Tibial artery (tissue), 4 donors: ENCODE measurements at regions of chr5 and their contacts with region 1.

Region 1: DNA sequence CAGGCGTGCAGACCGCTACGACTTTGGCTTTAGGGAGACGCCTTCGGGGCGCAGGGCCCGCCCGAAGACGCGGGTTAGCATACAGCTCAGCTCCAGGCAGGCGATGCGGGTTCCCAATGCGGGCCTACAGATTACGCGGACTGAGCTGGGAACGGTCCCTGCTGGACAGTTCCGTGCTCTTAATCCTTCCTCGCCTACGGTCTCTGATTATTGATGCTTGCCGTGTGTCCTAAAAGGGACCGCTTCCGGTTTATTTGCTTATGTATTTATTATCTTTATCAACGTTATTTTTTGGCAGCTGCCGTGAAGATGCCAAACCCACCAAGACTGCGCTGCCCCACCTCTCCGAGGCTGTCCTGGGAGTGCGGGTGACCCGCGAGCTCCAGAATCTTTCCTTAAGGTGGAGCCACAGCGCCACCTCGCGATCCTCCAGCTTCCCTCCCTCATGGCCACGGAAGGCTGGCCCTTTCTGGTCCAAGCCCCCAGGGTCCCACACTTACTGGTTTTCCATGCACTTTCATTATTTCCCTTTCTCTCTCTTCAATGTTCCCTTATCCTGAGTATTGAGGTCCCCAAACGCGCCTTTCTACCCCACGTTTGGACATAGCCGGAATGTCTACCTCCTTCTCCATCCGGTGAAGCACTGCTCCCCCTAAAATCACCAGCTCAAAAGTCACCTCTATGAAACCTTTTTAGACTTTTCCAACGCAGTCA is 7.0 kb upstream of the EBF1 start:
- DNase-seq: peak; percentile 75 to 85
- H3K4me3 ChIP-seq: peak overlapping the region; percentile 37 to 43
- H3K27ac ChIP-seq: peak overlapping the region in 1 of 2 donors; percentile 15
- H3K4me1 ChIP-seq: peaks cover 0 to 40% (median 16%) of the 10 kb centered on the region in 4 donors
- H3K27me3 ChIP-seq: no peaks in the 10 kb centered on the region
- CTCF ChIP-seq: peak; percentile 88 to 95

Region 2: GRCh38 chr5:157820593-157821252 is 1286.0 kb before region 1 on chr5:
- intact Hi-C with region 1: loop called (anchors 10 kb)
- DNase-seq: no peak
- H3K4me3 ChIP-seq: no peak overlapping the region
- H3K27ac ChIP-seq: peak overlapping the region; percentile 51 to 56
- H3K4me1 ChIP-seq: peaks cover 0 to 64% (median 16%) of the 10 kb centered on the region in 4 donors
- H3K27me3 ChIP-seq: no peaks in the 10 kb centered on the region
- CTCF ChIP-seq: peak; percentile 47 to 53

Region 3: DNA sequence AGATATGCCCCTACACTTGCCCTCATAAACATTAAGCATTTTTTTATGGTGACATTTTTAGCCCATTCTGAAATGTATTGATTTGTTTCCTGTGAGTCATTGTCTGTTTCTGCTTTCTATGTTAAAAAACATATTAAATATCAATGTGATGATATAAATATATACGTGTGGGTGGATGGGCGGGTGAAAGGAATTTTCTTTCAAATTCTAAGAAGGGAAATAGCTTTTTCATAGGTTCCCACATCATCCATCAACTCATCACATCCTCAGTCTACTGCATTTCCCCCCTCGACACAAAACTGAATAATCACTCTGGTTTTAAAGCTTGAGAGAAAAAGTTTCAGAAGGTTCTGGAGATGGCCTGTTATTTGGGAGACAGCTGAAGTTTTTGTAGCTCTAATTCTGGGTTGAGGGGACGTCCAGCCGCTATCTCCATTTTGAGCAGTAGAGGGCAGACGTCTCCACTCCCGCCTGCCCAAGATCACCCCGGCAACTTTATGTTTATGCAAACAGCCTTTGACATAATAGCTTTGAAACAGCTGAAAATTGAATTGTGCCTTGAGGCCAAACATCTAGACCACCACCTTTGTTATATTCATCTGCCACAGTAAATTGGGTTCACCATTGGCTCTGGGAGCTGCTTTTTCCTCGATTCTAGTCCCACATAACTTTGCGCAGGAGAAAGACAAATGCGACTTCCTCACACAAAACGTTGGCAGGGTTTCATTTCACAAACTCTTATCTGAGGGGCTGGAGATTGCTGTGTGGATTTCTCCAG is 1031.5 kb before region 1 on chr5:
- intact Hi-C with region 1: loop called (anchors 10 kb)
- DNase-seq: peak; percentile 43 to 70
- H3K4me3 ChIP-seq: peak overlapping the region; percentile 21 to 41
- H3K27ac ChIP-seq: no peak overlapping the region
- H3K4me1 ChIP-seq: peaks cover 0 to 5% (median 2%) of the 10 kb centered on the region in 4 donors
- H3K27me3 ChIP-seq: no peaks in the 10 kb centered on the region
- CTCF ChIP-seq: peak; percentile 76 to 82

Region 4: GRCh38 chr5:158174918-158175851 is 931.5 kb before region 1 on chr5:
- intact Hi-C with region 1: loop called (anchors 5 kb)
- DNase-seq: peak; percentile 75 to 82
- H3K4me3 ChIP-seq: no peak overlapping the region
- H3K27ac ChIP-seq: no peak overlapping the region
- H3K4me1 ChIP-seq: peaks cover 0 to 14% (median 12%) of the 10 kb centered on the region in 4 donors
- H3K27me3 ChIP-seq: no peaks in the 10 kb centered on the region
- CTCF ChIP-seq: peak; percentile 71 to 88

Region 5: DNA sequence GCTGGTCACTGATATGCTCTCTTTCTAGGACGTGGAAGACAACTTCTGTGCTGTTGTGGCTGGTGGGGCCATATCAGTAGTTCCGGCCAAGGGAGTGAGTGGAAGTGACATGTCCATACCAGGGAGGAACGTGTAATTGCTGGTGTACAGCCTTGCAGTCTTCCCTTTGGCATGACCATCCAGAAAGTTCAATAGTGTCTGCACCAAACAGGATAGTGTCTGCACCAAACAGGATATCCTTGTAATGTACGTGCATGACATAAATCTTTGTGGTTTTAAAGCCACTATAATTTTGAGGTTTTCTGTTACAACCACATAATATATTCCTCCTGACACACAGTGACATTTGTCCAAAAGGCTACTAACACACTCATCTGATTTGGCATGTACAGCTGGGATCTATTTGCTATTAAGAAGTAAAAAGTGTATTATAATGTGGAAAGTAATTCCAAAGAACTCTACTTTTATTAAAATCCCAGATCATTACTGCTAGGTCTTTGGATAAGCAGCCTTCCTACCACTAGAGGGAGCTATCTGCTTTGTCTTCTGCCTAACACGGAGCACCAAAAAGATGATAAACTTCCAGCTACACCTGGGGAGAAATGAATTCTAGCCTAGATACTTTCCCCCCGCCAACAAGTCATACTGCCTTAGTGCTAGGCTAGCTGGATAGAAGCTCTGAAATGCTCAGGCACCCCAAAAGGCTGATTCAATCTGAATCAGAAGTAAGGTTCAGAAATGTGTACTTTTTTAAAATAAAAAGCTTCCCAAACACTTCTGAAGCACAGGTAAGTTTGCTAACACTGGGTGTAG is 49.9 kb after region 1 on chr5:
- intact Hi-C with region 1: no loop called
- DNase-seq: no peak
- H3K4me3 ChIP-seq: no peak overlapping the region
- H3K27ac ChIP-seq: no peak overlapping the region
- H3K4me1 ChIP-seq: no peaks in the 10 kb centered on the region
- H3K27me3 ChIP-seq: no peaks in the 10 kb centered on the region
- CTCF ChIP-seq: peak; percentile 77 to 84